ENCODE measurements at regions of chr11 and their contacts with region 1.

Region 1: GRCh38 chr11:77127232-77127911 is 674 bp upstream of the MYO7A start:
- DNase-seq: no peak
- ATAC-seq: peak; percentile 54
- H3K4me3 ChIP-seq: peak overlapping the region; percentile 53 to 80 (median 54); a peak in 5 of 6 replicates
- H3K27ac ChIP-seq: peak overlapping the region; percentile 12
- H3K4me1 ChIP-seq: peaks cover 57% of the 10 kb centered on the region
- H3K27me3 ChIP-seq: peaks cover 0 to 13% of the 10 kb centered on the region in 2 experiments; a peak in 1 of 5 replicates
- CTCF ChIP-seq: peak; percentile 98
- EP300 ChIP-seq: no peak
- POLR2A ChIP-seq: no peak
- RAD21 ChIP-seq: peak; percentile 99

Region 2: GRCh38 chr11:77144196-77144856 is 17.0 kb after region 1 on chr11:
- CTCF ChIA-PET with region 1: no interaction called
- POLR2A ChIA-PET with region 1: interaction called, 18 read pairs
- in situ Hi-C with region 1: no loop called
- intact Hi-C with region 1: loop called (anchors 2 kb)
- DNase-seq: no peak
- ATAC-seq: no peak
- H3K4me3 ChIP-seq: peak overlapping the region in 1 of 3 experiments; percentile 36; a peak in 1 of 6 replicates
- H3K27ac ChIP-seq: peak overlapping the region; percentile 24
- H3K4me1 ChIP-seq: peaks cover 59% of the 10 kb centered on the region
- H3K27me3 ChIP-seq: no peaks in the 10 kb centered on the region
- CTCF ChIP-seq: no peak
- EP300 ChIP-seq: no peak
- POLR2A ChIP-seq: no peak
- RAD21 ChIP-seq: no peak

Region 3: GRCh38 chr11:77175021-77175842 is 47.9 kb after region 1 on chr11:
- CTCF ChIA-PET with region 1: interaction called, 4 read pairs
- POLR2A ChIA-PET with region 1: interaction called, 12 read pairs
- in situ Hi-C with region 1: no loop called
- intact Hi-C with region 1: loop called (anchors 1 kb)
- DNase-seq: no peak
- ATAC-seq: no peak
- H3K4me3 ChIP-seq: no peak overlapping the region
- H3K27ac ChIP-seq: no peak overlapping the region
- H3K4me1 ChIP-seq: peaks cover 56% of the 10 kb centered on the region
- H3K27me3 ChIP-seq: no peaks in the 10 kb centered on the region
- CTCF ChIP-seq: no peak
- EP300 ChIP-seq: no peak
- POLR2A ChIP-seq: no peak
- RAD21 ChIP-seq: no peak